ENCODE measurements at regions of chr3 and their contacts with region 1.

Region 1: DNA sequence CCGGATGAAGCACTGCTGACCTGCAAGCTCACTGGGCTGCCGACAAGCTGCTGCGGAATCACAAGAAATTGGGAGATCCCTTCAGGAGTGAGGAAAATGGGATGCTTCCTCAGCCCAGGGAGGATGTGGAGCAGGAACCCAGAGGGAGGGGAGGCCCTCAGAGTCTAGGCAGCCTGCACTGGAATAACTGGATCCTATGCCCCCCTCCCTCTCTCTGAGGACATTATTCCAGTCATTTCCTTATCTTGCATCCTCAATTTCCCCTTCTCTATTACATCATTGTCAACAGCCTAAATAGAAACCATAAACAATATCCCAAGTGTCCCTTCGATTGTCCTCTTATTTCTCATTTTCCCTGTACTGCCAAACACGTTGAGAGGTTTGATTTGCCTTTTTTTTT is 169.0 kb downstream of the OPA1 start:
- DNase-seq: no peak
- ATAC-seq: no peak
- H3K4me3 ChIP-seq: no peak overlapping the region
- H3K27ac ChIP-seq: no peak overlapping the region
- H3K4me1 ChIP-seq: peaks cover 25% of the 10 kb centered on the region
- H3K27me3 ChIP-seq: no peaks in the 10 kb centered on the region
- CTCF ChIP-seq: no peak
- EP300 ChIP-seq: no peak
- POLR2A ChIP-seq: no peak
- RAD21 ChIP-seq: no peak

Region 2: DNA sequence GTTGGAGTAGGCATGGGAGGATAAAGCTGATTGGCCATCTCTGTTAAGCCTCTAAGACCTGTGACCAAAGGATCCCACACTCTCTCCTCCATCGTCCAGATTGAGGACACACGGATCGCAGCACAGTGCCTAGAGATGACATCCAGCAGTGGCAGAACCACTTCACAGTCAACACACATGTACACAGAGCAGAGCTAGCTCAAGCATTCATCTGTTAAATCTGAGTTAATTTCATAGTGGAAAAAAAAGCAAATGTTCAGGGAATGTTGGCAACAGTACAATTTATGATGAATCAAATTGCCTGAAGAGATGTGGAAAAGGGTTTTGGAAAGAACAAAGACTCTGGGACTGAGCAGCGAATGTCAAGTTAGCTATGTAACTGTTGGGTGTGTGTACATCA is 629.0 kb before region 1 on chr3:
- CTCF ChIA-PET with region 1: no interaction called
- POLR2A ChIA-PET with region 1: no interaction called
- in situ Hi-C with region 1: no loop called
- intact Hi-C with region 1: no loop called
- DNase-seq: no peak
- ATAC-seq: no peak
- H3K4me3 ChIP-seq: no peak overlapping the region
- H3K27ac ChIP-seq: no peak overlapping the region
- H3K4me1 ChIP-seq: no peaks in the 10 kb centered on the region
- H3K27me3 ChIP-seq: no peaks in the 10 kb centered on the region; a peak in 1 of 5 replicates
- CTCF ChIP-seq: no peak
- EP300 ChIP-seq: no peak
- POLR2A ChIP-seq: no peak
- RAD21 ChIP-seq: no peak

Region 3: DNA sequence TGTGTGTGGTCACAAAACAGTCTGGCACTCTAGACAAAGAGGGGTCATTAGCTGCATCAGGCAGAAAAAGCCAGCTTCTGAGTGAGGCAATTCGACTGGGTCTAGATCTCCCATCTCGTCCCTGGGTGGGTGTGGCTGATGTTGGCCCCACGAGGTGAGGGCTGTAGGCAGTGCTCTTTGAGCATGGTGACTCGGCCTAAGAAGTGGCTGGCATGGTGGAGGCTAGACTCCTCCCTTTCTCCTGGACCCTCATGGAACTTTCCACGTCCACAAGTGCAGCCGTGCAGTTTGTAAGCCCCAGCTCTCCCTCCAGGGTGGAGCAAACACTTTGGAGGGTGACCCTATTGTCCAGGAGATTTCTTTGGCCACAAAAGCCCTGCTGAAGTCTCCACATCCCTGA is 34.9 kb before region 1 on chr3:
- CTCF ChIA-PET with region 1: no interaction called
- POLR2A ChIA-PET with region 1: no interaction called
- in situ Hi-C with region 1: no loop called
- intact Hi-C with region 1: loop called (anchors 2 kb)
- DNase-seq: no peak
- ATAC-seq: peak; percentile 44
- H3K4me3 ChIP-seq: no peak overlapping the region
- H3K27ac ChIP-seq: no peak overlapping the region
- H3K4me1 ChIP-seq: peaks cover 42% of the 10 kb centered on the region
- H3K27me3 ChIP-seq: peaks cover 0 to 1% of the 10 kb centered on the region in 2 experiments; a peak in 2 of 5 replicates
- CTCF ChIP-seq: no peak
- EP300 ChIP-seq: no peak
- POLR2A ChIP-seq: no peak
- RAD21 ChIP-seq: no peak

Measured in HepG2 (cell line).